Activated CD4-positive, alpha-beta memory T cell treated with anti-CD3 and anti-CD28 coated beads for 36 hours (primary cell): ENCODE measurements at regions of chr2 and their contacts with region 1.

Region 1: GRCh38 chr2:10400568-10400977 is 47.6 kb downstream of the ODC1 start:
- DNase-seq: peak; percentile 74
- H3K4me3 Mint-ChIP-seq: no peak overlapping the region
- H3K27ac Mint-ChIP-seq: peak overlapping the region; percentile 73
- H3K4me1 Mint-ChIP-seq: peaks cover 32% of the 10 kb centered on the region
- H3K27me3 Mint-ChIP-seq: no peaks in the 10 kb centered on the region

Region 2: GRCh38 chr2:10324095-10324835 is 76.3 kb before region 1 on chr2:
- CTCF ChIA-PET with region 1: no interaction called
- POLR2A ChIA-PET with region 1: no interaction called
- intact Hi-C with region 1: no loop called
- DNase-seq: no peak
- H3K4me3 Mint-ChIP-seq: no peak overlapping the region
- H3K27ac Mint-ChIP-seq: no peak overlapping the region
- H3K4me1 Mint-ChIP-seq: peaks cover 70% of the 10 kb centered on the region
- H3K27me3 Mint-ChIP-seq: no peaks in the 10 kb centered on the region

Region 3: DNA sequence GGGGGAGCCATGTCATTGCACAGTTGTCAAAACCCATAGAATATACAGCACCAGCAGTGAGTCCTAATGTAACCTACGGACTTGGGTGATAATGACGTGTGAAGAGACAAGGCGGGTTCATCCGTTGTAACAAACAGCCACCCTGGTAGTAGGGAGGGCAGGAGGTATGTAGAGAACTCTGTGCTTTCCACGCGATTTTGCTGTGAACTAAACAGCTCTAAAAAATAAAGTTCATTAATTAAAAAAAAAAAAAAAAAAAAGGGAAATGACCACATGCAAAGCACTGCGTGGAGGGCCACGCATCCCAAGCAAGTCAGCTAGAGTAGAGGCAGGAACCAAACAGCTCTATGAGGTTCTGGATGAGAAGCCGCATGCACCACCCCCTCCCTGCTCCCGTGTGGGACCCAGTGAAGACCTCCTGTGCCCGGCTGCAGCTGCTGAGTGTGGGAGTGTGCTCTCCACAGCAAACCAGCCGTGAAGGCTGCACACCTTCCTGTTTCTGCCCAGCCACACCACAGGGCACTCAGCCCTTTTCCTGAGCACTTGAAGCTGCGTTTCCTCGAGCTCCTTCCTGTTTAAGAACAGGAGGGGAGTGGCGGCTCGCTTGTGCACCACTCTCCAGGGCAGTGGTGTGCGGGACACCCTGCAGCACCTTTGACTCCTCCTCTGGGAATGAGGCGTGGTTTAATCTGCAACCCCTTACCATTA is 18.1 kb before region 1 on chr2:
- CTCF ChIA-PET with region 1: interaction called, 3 read pairs
- POLR2A ChIA-PET with region 1: no interaction called
- intact Hi-C with region 1: loop called (anchors 2 kb)
- DNase-seq: peak; percentile 52
- H3K4me3 Mint-ChIP-seq: peak overlapping the region; percentile 27
- H3K27ac Mint-ChIP-seq: no peak overlapping the region
- H3K4me1 Mint-ChIP-seq: peaks cover 89% of the 10 kb centered on the region
- H3K27me3 Mint-ChIP-seq: no peaks in the 10 kb centered on the region